Psoas muscle (tissue), 8 donors: ENCODE measurements at regions of chr11 and their contacts with region 1.

Region 1: DNA sequence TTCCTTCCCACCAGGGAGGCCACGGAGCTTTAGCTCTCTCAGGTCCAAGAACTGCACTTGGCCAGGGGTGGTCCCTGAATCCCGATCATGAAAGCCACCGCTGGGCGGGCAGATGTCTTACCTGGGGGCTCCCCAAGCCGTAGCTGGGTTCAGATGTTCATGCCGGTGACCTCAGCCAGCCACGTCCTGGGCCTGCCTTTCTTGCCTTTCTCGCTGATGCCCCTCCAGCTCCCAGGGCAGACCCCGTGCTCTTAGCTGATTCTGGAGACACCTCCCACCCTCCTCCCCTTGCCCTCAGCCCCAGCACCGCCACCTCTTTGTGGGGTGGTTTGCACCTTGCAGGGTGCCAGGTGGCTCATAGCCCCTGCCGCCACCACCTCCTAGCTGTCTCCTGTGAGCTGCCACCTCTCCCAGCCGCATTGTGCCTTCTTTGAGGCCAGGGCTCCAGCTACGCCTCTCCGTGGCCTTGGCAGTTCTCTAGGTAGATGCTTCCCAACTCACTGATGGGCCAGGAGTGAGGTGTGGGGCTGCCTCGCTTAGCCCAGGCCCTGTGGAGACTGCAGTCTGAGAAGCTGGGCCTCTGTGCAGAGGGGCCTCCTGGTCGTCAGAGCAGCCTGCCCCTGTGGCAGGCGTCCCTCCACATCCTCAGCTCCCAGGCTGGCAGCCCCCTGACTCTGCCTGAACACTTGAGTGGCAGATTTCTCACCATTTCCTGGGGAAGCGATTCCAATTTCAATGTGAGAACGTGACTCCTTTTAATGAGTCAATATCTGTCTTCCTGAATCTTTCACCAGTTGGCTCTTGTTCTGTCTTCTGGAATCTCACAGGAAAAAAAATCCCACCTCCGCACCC is 97.6 kb upstream of the B3GAT1 start:
- DNase-seq: peak in 1 of 2 donors; percentile 42
- ATAC-seq: no peak
- H3K4me3 ChIP-seq: no peak overlapping the region
- H3K27ac ChIP-seq: no peak overlapping the region
- H3K4me1 ChIP-seq: no peaks in the 10 kb centered on the region
- H3K27me3 ChIP-seq: peaks cover 0 to 7% (median 3%) of the 10 kb centered on the region in 3 donors
- CTCF ChIP-seq: no peak

Region 2: DNA sequence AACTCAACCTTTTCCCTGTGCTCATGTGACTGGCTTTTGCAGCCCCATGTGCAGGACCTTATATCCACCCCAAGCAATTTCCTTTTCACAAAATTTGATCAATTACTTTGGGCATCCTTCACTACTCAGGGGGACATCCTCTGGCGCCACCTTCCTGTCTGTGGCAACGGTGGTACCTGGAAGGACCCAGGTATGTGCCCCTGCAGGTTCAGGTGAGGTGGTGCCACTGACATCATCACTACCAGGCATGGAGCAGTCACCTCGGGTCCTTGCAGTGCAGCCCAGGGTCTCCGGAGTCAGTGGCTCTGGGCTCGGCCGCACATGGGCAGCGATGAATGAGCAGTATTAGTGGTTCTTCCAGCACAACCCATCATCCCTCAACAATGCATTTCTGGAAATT is 59.9 kb before region 1 on chr11:
- intact Hi-C with region 1: no loop called
- DNase-seq: no peak
- ATAC-seq: no peak
- H3K4me3 ChIP-seq: no peak overlapping the region
- H3K27ac ChIP-seq: no peak overlapping the region
- H3K4me1 ChIP-seq: no peaks in the 10 kb centered on the region
- H3K27me3 ChIP-seq: peaks cover 0 to 1% (median 0%) of the 10 kb centered on the region in 3 donors
- CTCF ChIP-seq: no peak

Region 3: GRCh38 chr11:134559602-134559962 is 50.0 kb after region 1 on chr11:
- intact Hi-C with region 1: loop called in 1 of 2 experiments (anchors 5 kb)
- DNase-seq: no peak
- ATAC-seq: no peak
- H3K4me3 ChIP-seq: no peak overlapping the region
- H3K27ac ChIP-seq: no peak overlapping the region
- H3K4me1 ChIP-seq: no peaks in the 10 kb centered on the region
- H3K27me3 ChIP-seq: no peaks in the 10 kb centered on the region
- CTCF ChIP-seq: no peak